Activated CD8-positive, alpha-beta T cell treated with anti-CD3 and anti-CD28 coated beads for 36 hours (primary cell): ENCODE measurements at regions of chr3 and their contacts with region 1.

Region 1: DNA sequence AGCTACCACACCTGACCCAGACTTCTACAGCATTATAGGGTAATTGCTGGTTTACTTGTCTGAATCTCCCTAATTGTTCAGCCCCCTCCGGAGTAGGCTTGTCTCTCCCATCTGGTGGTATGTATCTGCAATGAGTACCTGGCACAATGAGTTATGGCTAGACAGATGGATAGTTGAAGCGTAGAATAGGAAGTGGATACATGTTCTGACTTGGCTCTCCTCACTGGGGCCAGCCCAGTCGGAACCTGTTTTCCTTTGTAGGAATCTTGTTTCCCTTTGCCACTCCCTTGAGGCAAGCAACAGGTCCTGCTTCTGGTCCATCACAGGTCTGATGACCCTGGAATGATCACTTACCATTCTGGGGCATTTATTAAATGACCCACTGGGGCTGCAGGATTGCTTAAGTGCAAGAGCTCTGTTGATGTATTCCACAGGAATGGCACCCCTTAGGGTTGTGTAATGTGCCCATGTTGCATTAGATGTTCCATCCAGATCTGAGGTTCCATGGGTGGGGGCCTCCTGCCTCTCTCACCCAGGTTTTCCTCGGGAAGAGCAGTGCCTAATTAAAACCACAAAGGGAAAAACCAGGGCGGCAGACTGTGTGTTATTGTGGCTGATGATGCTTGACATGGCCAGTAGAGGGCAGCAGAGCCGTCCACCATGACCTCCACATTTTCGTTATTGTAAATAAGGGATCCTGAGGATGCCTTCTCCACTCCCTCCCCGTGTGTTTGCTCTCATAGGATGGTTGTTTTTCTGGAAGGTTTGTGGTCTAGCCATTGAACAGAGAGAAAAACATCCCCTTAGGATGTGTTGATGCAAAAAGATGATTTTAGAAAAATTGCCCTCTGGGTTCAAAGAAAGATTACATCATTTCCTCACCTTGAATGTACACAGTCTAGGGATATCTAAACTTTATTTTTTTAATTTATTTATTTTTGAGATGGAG is 58.0 kb downstream of the CMTM8 start:
- DNase-seq: peak; percentile 72
- ATAC-seq: peak; percentile 81
- H3K4me3 Mint-ChIP-seq: no peak overlapping the region
- H3K27ac Mint-ChIP-seq: peak overlapping the region; percentile 55
- H3K4me1 Mint-ChIP-seq: peaks cover 16% of the 10 kb centered on the region
- H3K27me3 Mint-ChIP-seq: no peaks in the 10 kb centered on the region
- CTCF ChIP-seq: peak; percentile 88

Region 2: GRCh38 chr3:32062950-32063582 is 233.5 kb before region 1 on chr3:
- CTCF ChIA-PET with region 1: no interaction called
- POLR2A ChIA-PET with region 1: no interaction called
- intact Hi-C with region 1: no loop called
- DNase-seq: no peak
- ATAC-seq: no peak
- H3K4me3 Mint-ChIP-seq: no peak overlapping the region
- H3K27ac Mint-ChIP-seq: no peak overlapping the region
- H3K4me1 Mint-ChIP-seq: no peaks in the 10 kb centered on the region
- H3K27me3 Mint-ChIP-seq: no peaks in the 10 kb centered on the region
- CTCF ChIP-seq: no peak

Region 3: DNA sequence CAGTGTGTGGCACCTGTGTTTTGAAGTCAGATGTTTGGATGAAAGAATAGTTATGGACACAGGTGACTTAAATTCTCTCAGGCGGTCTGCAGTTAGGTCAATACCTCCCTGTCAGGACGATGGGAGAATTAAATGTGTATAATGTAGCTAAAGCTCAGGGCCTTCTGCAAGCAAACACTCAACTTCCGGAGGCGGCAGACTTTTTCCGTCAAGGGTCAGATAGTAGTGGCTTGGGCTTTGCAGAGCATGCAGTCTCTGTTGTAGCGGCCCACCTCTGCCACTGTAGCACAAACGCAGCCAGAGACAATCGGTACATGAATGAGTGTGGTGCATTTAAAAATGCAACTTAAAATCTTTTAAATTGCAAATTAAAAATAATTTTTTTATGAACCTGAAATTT is 10.6 kb before region 1 on chr3:
- CTCF ChIA-PET with region 1: interaction called, 17 read pairs
- POLR2A ChIA-PET with region 1: interaction called, 3 read pairs
- intact Hi-C with region 1: no loop called
- DNase-seq: no peak
- ATAC-seq: no peak
- H3K4me3 Mint-ChIP-seq: no peak overlapping the region
- H3K27ac Mint-ChIP-seq: no peak overlapping the region
- H3K4me1 Mint-ChIP-seq: peaks cover 7% of the 10 kb centered on the region
- H3K27me3 Mint-ChIP-seq: no peaks in the 10 kb centered on the region
- CTCF ChIP-seq: no peak

Region 4: DNA sequence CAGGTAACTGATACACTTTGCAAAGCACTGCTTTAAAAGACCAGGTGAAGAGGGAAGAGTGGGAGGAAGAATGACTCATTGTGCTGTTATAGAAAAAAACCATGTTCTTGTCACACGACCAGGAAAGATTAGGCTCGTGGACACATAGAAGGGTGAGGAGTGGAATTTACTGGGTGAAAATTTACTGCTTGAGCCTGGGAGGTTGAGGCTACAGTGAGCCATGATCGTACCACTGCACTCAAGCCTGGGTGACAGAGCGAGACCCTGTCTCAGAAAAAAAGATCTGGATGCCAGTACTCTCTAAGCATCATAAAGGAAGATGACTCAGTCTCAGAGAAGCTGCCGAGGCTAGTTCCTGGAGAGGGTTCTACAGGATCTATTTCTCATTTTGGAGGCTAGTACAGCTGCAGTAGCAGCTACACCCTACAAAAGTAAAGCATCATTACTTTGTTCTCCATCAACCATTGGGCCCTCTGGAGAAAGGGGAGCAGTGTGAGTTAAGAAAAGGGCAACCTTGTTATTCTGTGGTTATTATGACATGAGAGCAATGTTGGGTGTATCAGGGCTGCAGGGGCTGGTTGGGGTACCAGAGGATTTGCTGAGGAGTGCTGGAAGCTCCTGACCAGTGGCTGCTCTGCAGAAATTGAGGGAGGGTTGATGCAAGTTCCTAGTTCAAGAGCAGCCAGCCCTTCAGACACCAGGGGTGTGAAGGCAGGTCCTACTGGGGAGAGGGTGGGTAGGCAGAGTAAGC is 17.4 kb after region 1 on chr3:
- CTCF ChIA-PET with region 1: interaction called, 50 read pairs
- POLR2A ChIA-PET with region 1: interaction called, 3 read pairs
- intact Hi-C with region 1: no loop called
- DNase-seq: peak; percentile 47
- ATAC-seq: peak; percentile 95
- H3K4me3 Mint-ChIP-seq: peak overlapping the region; percentile 56
- H3K27ac Mint-ChIP-seq: peak overlapping the region; percentile 74
- H3K4me1 Mint-ChIP-seq: peaks cover 23% of the 10 kb centered on the region
- H3K27me3 Mint-ChIP-seq: no peaks in the 10 kb centered on the region
- CTCF ChIP-seq: no peak

Region 5: GRCh38 chr3:32334675-32335074 is 38.1 kb after region 1 on chr3:
- CTCF ChIA-PET with region 1: interaction called, 33 read pairs
- POLR2A ChIA-PET with region 1: interaction called, 3 read pairs
- intact Hi-C with region 1: loop called (anchors 5 kb)
- DNase-seq: peak; percentile 61
- ATAC-seq: peak; percentile 81
- H3K4me3 Mint-ChIP-seq: no peak overlapping the region
- H3K27ac Mint-ChIP-seq: no peak overlapping the region
- H3K4me1 Mint-ChIP-seq: peaks cover 21% of the 10 kb centered on the region
- H3K27me3 Mint-ChIP-seq: no peaks in the 10 kb centered on the region
- CTCF ChIP-seq: peak; percentile 60

Region 6: DNA sequence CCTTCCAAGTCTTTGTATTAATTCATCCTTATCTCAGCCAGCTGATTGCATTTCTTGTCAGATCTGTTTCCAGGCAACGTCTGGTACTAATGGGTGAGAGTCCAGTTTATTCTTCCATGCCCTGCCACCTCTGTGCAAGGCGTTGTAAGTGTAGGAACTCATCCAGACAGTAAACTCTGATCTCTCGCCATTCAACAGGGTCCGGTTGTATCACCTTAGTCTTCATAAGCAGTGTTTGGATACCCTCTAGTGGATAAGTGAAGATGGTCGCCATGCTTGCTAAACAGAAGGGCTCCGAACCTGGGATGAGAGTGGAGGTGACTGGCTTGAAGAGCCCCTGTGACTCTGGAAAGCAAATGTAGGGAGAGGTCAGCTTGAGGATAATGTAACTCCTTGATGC is 43.5 kb after region 1 on chr3:
- CTCF ChIA-PET with region 1: interaction called, 33 read pairs
- POLR2A ChIA-PET with region 1: interaction called, 3 read pairs
- intact Hi-C with region 1: no loop called
- DNase-seq: peak; percentile 23
- ATAC-seq: peak; percentile 76
- H3K4me3 Mint-ChIP-seq: no peak overlapping the region
- H3K27ac Mint-ChIP-seq: no peak overlapping the region
- H3K4me1 Mint-ChIP-seq: peaks cover 11% of the 10 kb centered on the region
- H3K27me3 Mint-ChIP-seq: no peaks in the 10 kb centered on the region
- CTCF ChIP-seq: peak; percentile 35

Region 7: GRCh38 chr3:32593903-32594525 is 297.5 kb after region 1 on chr3:
- CTCF ChIA-PET with region 1: no interaction called
- POLR2A ChIA-PET with region 1: no interaction called
- intact Hi-C with region 1: no loop called
- DNase-seq: no peak
- ATAC-seq: no peak
- H3K4me3 Mint-ChIP-seq: no peak overlapping the region
- H3K27ac Mint-ChIP-seq: no peak overlapping the region
- H3K4me1 Mint-ChIP-seq: no peaks in the 10 kb centered on the region
- H3K27me3 Mint-ChIP-seq: peaks cover 5% of the 10 kb centered on the region
- CTCF ChIP-seq: no peak